ENCODE measurements at regions of chr18 and their contacts with region 1.

Region 1: DNA sequence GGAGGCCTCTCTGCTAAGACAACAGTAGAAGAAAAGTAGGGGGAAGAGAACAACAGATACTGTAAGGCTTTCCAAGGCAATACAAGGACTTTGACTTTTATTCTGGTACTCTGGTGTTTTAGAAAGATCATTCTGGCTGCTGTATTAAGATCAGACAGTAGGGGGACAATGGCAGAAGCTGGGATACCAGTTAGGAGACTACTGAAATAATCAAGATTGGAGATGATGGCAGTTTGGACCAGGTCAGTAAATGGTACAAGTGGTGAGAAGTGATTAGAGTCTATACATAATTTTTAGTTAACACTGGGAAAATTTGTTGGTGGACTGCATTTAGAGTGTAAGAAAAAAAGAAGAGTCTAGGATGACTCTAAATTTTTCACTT is 139.7 kb downstream of the ROCK1 start:
- DNase-seq: no peak
- H3K4me3 ChIP-seq: no peak overlapping the region
- H3K27ac ChIP-seq: no peak overlapping the region
- H3K4me1 ChIP-seq: no peaks in the 10 kb centered on the region
- H3K27me3 ChIP-seq: no peaks in the 10 kb centered on the region
- CTCF ChIP-seq: peak; percentile 60

Region 2: GRCh38 chr18:21134898-21135297 is 163.0 kb after region 1 on chr18:
- CTCF ChIA-PET with region 1: no interaction called
- POLR2A ChIA-PET with region 1: no interaction called
- intact Hi-C with region 1: loop called (anchors 10 kb)
- DNase-seq: peak in 1 of 2 experiments; percentile 2
- H3K4me3 ChIP-seq: no peak overlapping the region
- H3K27ac ChIP-seq: no peak overlapping the region
- H3K4me1 ChIP-seq: no peaks in the 10 kb centered on the region
- H3K27me3 ChIP-seq: no peaks in the 10 kb centered on the region
- CTCF ChIP-seq: peak; percentile 44

Region 3: GRCh38 chr18:21513292-21513691 is 541.4 kb after region 1 on chr18:
- CTCF ChIA-PET with region 1: no interaction called
- POLR2A ChIA-PET with region 1: no interaction called
- intact Hi-C with region 1: no loop called
- DNase-seq: no peak
- H3K4me3 ChIP-seq: no peak overlapping the region
- H3K27ac ChIP-seq: no peak overlapping the region
- H3K4me1 ChIP-seq: no peaks in the 10 kb centered on the region
- H3K27me3 ChIP-seq: no peaks in the 10 kb centered on the region
- CTCF ChIP-seq: no peak